HCT116 (cell line): ENCODE measurements at regions of chr11 and their contacts with region 1.

Region 1: GRCh38 chr11:62665075-62665598 is at the starts of genes C11orf98 and CSKMT:
- DNase-seq: peak; percentile 84
- ATAC-seq: peak; percentile 81
- H3K4me3 ChIP-seq: peak within 1 kb of the TSS; percentile 99
- H3K27ac ChIP-seq: peak within 1 kb of the TSS; percentile 96
- H3K4me1 ChIP-seq: peaks cover 24 to 43% of the 10 kb centered on the region in 2 experiments; a peak in 3 of 4 replicates
- H3K27me3 ChIP-seq: no peaks in the 10 kb centered on the region
- CTCF ChIP-seq: no peak
- POLR2A ChIP-seq: peak; percentile 99
- RAD21 ChIP-seq: no peak
- total RNA-seq, gene C11orf98: 121 TPM
- total RNA-seq, gene CSKMT: 63.5 TPM

Region 2: GRCh38 chr11:62573592-62574362 is 91.4 kb before region 1 on chr11 and contains the start of gene EEF1G:
- CTCF ChIA-PET with region 1: no interaction called
- POLR2A ChIA-PET with region 1: interaction called, 17 read pairs
- RAD21 ChIA-PET with region 1: no interaction called
- intact Hi-C with region 1: no loop called
- DNase-seq: peak; percentile 99
- ATAC-seq: peak; percentile 95
- H3K4me3 ChIP-seq: peak within 1 kb of the TSS; percentile 76 to 99
- H3K27ac ChIP-seq: peak within 1 kb of the TSS; percentile 94
- H3K4me1 ChIP-seq: peaks cover 8 to 30% of the 10 kb centered on the region in 2 experiments
- H3K27me3 ChIP-seq: no peaks in the 10 kb centered on the region
- CTCF ChIP-seq: no peak
- POLR2A ChIP-seq: peak; percentile 79
- RAD21 ChIP-seq: no peak
- total RNA-seq, gene EEF1G: 1,901 TPM

Region 3: GRCh38 chr11:62601394-62602140 is 63.6 kb before region 1 on chr11 and contains the start of gene MTA2:
- CTCF ChIA-PET with region 1: no interaction called
- POLR2A ChIA-PET with region 1: interaction called, 11 read pairs
- RAD21 ChIA-PET with region 1: interaction called in 1 of 2 experiments, 6 read pairs
- intact Hi-C with region 1: no loop called
- DNase-seq: peak; percentile 95
- ATAC-seq: peak; percentile 87
- H3K4me3 ChIP-seq: peak within 1 kb of the TSS; percentile 92 to 94
- H3K27ac ChIP-seq: peak within 1 kb of the TSS; percentile 99
- H3K4me1 ChIP-seq: peaks cover 13 to 44% of the 10 kb centered on the region in 2 experiments
- H3K27me3 ChIP-seq: no peaks in the 10 kb centered on the region
- CTCF ChIP-seq: no peak
- POLR2A ChIP-seq: peak; percentile 20
- RAD21 ChIP-seq: no peak
- total RNA-seq, gene MTA2: 98.9 TPM

Region 4: DNA sequence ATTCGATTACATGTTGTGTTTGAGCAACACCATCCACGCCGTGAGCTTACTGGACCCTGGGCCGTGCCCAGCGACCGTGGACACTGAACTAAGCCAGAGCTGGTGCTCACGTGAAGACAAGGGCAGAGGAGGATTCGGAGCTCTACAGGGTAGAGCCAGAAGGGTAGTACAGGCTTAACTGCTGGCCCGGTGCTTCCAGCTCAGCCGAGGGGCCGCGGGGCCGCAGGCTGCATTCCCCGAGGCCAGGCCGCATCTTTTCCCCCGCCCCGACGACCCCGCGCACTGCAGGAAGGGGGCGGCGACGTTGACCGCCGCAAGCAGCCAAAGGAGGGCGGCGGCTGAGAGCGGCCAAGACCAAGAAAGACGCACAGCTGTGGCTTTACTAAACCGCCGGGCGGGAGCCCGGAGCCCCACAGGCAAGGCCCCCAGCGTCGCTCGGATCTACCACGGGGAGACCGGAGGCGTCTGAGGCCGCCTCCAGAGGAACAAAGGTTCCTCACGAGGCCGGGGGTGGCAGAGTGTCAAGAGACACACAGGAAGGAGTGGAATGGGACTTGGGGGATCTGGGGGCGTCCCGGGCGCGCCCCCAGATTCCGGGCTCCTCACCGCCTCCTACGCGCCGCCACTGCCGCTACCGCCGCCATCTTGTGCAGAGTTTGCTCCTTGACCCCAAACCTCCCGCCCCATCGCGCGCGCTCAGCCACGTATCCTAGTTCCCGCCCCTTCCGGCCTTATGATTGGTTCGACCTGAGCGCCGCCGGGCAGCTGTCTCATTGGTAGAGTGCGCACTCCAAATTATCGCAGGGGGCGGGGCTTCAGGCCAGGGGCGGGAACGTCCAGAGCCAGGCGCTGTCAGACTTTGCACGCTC is 18.9 kb before region 1 on chr11 and contains the start of gene GANAB:
- CTCF ChIA-PET with region 1: no interaction called
- POLR2A ChIA-PET with region 1: interaction called, 195 read pairs
- RAD21 ChIA-PET with region 1: no interaction called
- intact Hi-C with region 1: no loop called
- DNase-seq: peak; percentile 88
- ATAC-seq: peak; percentile 97
- H3K4me3 ChIP-seq: peak within 1 kb of the TSS; percentile 96 to 100
- H3K27ac ChIP-seq: peak within 1 kb of the TSS; percentile 92
- H3K4me1 ChIP-seq: peaks cover 5 to 20% of the 10 kb centered on the region in 2 experiments; a peak in 3 of 4 replicates
- H3K27me3 ChIP-seq: no peaks in the 10 kb centered on the region
- CTCF ChIP-seq: no peak
- POLR2A ChIP-seq: peak; percentile 83
- RAD21 ChIP-seq: no peak
- total RNA-seq, gene GANAB: 410 TPM

Region 5: DNA sequence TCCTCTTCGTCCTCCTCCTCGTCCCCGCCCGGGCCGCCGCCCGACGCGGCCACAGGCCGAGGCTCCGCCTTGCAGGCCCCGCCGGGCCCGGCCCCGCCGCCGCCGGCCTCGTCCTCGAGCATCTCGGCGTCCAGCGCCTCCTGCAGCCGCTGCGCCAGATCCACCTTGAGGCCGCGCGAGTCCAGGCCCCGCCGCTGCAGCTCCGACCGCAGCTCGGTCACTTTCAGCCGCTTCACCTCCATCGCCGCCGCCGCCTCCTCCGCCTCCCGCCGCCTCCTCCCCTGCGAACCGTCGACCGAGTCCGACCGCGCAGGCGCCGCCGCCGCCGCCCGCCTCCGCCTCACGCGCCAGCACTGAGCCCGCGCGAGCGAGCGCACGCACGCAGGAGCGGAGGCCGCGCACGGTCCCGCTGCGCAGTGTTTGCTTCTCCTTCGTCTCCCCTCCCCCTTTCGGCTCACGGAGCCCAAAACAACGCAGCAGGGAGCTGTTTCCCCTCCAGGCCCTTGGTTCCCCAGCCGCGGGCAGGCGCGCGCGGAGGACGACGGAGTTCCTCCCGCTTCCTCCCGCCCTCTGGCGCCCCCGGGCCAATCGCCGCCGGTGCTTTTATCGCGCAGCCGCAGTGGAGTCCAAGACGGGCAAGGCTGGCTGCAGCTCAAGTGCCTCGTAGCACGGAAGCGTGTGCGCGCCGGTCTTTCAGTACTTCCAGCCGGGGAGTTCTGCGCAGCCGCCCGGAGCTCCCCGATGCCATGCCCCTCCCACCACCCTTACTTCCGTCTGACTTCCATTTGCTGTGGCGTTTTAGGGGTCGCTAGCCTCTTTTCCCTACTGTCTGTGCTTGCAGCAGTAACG is 62.0 kb after region 1 on chr11 and contains the start of gene HNRNPUL2:
- CTCF ChIA-PET with region 1: no interaction called
- POLR2A ChIA-PET with region 1: interaction called, 16 read pairs
- RAD21 ChIA-PET with region 1: no interaction called
- intact Hi-C with region 1: no loop called
- DNase-seq: peak; percentile 98
- ATAC-seq: peak; percentile 84
- H3K4me3 ChIP-seq: peak within 1 kb of the TSS; percentile 98 to 100
- H3K27ac ChIP-seq: peak within 1 kb of the TSS; percentile 96
- H3K4me1 ChIP-seq: peaks cover 14 to 25% of the 10 kb centered on the region in 2 experiments
- H3K27me3 ChIP-seq: no peaks in the 10 kb centered on the region
- CTCF ChIP-seq: no peak
- POLR2A ChIP-seq: peak; percentile 79
- RAD21 ChIP-seq: no peak
- total RNA-seq, gene HNRNPUL2: 45.8 TPM